Activated CD4-positive, alpha-beta T cell treated with anti-CD3 and anti-CD28 coated beads, Interleukin-2, amount 10 ng/mL, durations not matched to agents 7 days and 5 days (primary cell): ENCODE measurements at regions of chr9 and their contacts with region 1.

Region 1: DNA sequence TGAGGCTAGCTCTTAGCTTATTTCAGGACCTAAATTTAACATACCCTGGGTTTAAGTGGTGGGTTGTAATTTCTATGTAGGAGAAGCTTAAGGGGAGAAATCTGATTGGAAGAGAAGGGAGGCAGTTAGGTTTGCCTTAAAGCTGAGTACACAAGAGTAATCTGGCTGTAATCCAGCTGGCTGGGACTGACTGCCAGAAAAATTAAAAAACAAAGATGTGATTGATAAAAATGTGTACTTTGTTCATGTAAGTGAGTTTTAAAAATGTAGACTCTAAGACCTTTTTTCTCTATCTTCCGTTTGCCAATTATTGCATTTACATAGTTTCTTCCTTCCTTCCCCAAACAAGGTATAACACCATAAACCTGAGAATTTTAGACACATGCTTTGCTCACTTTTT is 17.5 kb upstream of the MSMP start:
- DNase-seq: no peak
- H3K4me3 Mint-ChIP-seq: no peak overlapping the region
- H3K27ac Mint-ChIP-seq: no peak overlapping the region
- H3K4me1 Mint-ChIP-seq: peaks cover 3% of the 10 kb centered on the region
- H3K27me3 Mint-ChIP-seq: no peaks in the 10 kb centered on the region

Region 2: GRCh38 chr9:35790385-35791296 is 19.1 kb after region 1 on chr9:
- CTCF ChIA-PET with region 1: interaction called, 10 read pairs
- POLR2A ChIA-PET with region 1: no interaction called
- DNase-seq: peak; percentile 75
- H3K4me3 Mint-ChIP-seq: no peak overlapping the region
- H3K27ac Mint-ChIP-seq: no peak overlapping the region
- H3K4me1 Mint-ChIP-seq: peaks cover 16% of the 10 kb centered on the region
- H3K27me3 Mint-ChIP-seq: no peaks in the 10 kb centered on the region